CD8-positive, alpha-beta memory T cell (primary cell): ENCODE measurements at regions of chr14 and their contacts with region 1.

Region 1: GRCh38 chr14:92039719-92040430 is at the start of gene TRIP11:
- DNase-seq: peak; percentile 88 to 96 (median 92)
- H3K4me3 ChIP-seq: peak within 1 kb of the TSS; percentile 83
- H3K4me3 Mint-ChIP-seq: peak within 1 kb of the TSS; percentile 93 to 99 (median 97)
- H3K27ac ChIP-seq: peak within 1 kb of the TSS; percentile 89
- H3K27ac Mint-ChIP-seq: peak within 1 kb of the TSS; percentile 98 to 100 (median 98)
- H3K4me1 ChIP-seq: peaks cover 38% of the 10 kb centered on the region
- H3K4me1 Mint-ChIP-seq: peaks cover 47 to 57% (median 49%) of the 10 kb centered on the region in 3 donors
- H3K27me3 ChIP-seq: no peaks in the 10 kb centered on the region
- H3K27me3 Mint-ChIP-seq: no peaks in the 10 kb centered on the region
- total RNA-seq, gene TRIP11: 45.7 to 50.8 TPM

Region 2: DNA sequence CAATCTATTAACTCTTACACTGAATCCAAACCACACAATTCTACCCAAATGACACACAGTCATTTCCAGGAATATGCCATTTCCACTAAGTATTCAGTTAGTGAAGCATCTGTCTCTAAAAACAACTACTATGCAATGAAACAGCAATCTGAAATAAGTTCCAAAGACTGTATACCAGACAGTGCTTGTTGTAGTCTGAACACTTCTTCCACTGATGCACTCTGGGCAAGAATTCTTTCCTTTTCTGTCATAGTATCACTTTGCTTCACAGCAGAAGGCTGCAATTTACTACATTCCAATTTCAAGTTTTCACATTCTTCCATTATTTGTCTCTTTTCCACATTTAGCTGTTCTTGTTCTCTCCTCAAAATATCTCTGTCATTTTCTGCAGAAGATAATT is 25.8 kb before region 1 on chr14:
- CTCF ChIA-PET with region 1: no interaction called
- POLR2A ChIA-PET with region 1: no interaction called
- DNase-seq: no peak
- H3K4me3 ChIP-seq: no peak overlapping the region
- H3K4me3 Mint-ChIP-seq: no peak overlapping the region
- H3K27ac ChIP-seq: no peak overlapping the region
- H3K27ac Mint-ChIP-seq: no peak overlapping the region
- H3K4me1 ChIP-seq: no peaks in the 10 kb centered on the region
- H3K4me1 Mint-ChIP-seq: peaks cover 11 to 12% (median 12%) of the 10 kb centered on the region in 3 donors
- H3K27me3 ChIP-seq: no peaks in the 10 kb centered on the region
- H3K27me3 Mint-ChIP-seq: no peaks in the 10 kb centered on the region

Region 3: DNA sequence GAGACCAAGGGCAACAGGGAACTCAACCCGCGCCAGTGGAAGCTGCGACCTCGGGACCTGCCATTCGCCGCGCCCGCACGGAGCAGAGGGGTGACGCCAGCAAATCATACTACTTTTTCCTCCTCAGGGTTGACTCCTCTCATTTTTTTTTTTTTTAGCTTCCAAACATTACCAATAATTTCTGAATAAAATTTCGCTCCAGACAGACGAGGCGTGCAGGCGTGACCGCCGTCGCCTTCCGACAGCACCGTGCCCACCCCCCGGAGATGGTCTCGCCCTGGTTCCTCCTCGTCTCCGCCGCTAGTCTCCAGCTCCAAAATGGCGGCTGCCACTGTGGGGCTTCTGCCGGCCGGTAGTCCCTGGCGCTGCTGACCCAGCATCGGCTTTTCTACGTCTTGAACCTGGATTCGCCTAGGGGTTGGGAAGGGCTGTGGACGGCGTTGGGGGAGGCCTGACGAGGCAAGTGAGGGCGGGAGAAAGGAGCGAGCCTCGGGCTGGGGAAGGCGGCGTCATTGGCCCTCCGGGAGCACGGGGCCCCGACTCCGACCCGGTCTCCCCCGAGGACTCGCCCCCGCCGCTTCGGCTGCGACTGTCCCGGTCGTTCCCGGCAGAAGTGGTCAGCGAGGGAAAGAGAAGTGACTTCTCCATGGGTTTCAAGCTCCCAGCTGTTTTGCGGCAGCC is 81.9 kb after region 1 on chr14 and contains the starts of genes CPSF2 and NDUFB1:
- CTCF ChIA-PET with region 1: interaction called, 7 read pairs
- POLR2A ChIA-PET with region 1: interaction called, 24 read pairs
- DNase-seq: peak; percentile 76 to 88 (median 81)
- H3K4me3 ChIP-seq: peak within 1 kb of the TSS; percentile 95
- H3K4me3 Mint-ChIP-seq: peak within 1 kb of the TSS; percentile 94 to 100 (median 99)
- H3K27ac ChIP-seq: peak within 1 kb of the TSS; percentile 98
- H3K27ac Mint-ChIP-seq: peak within 1 kb of the TSS; percentile 99 to 100 (median 100)
- H3K4me1 ChIP-seq: peaks cover 23% of the 10 kb centered on the region
- H3K4me1 Mint-ChIP-seq: peaks cover 45 to 75% (median 52%) of the 10 kb centered on the region in 3 donors
- H3K27me3 ChIP-seq: no peaks in the 10 kb centered on the region
- H3K27me3 Mint-ChIP-seq: peaks cover 0 to 2% of the 10 kb centered on the region in 2 donors
- total RNA-seq, gene CPSF2: 134 to 144 TPM
- total RNA-seq, gene NDUFB1: 103 to 112 TPM